ENCODE measurements at regions of chr14 and their contacts with region 1.

Region 1: DNA sequence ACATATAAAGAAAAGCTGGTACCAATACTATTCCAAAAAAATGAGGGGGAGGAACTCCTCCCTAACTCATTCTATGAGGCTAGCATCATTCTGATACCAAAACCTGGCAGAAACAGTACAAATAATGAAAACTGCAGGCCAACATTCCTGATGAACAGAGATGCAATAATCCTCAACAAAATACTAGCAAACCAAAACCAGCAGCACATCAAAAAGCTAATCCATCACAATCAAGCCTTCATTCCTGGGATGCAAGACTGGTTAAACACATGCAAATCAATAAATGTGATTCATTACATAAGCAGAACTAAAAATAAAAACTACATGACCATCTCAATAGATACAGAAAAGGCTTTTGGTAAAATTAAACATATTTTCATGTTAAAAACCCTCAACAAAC is 281.3 kb downstream of the KCNH5 start:
- DNase-seq: no peak
- ATAC-seq: no peak
- H3K4me3 ChIP-seq: no peak overlapping the region
- H3K27ac ChIP-seq: no peak overlapping the region
- H3K4me1 ChIP-seq: no peaks in the 10 kb centered on the region
- H3K27me3 ChIP-seq: no peaks in the 10 kb centered on the region
- CTCF ChIP-seq: no peak
- POLR2A ChIP-seq: no peak
- RAD21 ChIP-seq: no peak

Region 2: DNA sequence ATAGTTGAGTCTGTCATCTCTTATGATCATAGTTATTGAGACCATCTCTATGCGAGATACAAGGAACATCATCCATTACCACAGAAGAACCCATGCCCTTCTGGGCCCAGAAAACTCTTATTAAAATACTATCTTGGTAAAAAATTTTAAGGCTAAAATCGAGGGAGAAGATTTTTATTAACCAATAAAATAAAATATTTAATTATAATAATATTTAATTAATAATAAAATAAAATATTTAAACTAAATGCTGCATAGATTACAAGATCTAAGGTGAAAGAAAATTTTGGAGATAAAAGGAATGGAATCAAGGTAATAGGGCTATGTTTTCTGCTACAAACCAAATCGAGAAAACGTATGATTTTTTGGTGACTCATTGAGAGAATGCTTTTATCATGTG is 258.9 kb before region 1 on chr14:
- CTCF ChIA-PET with region 1: no interaction called
- POLR2A ChIA-PET with region 1: no interaction called
- dilution Hi-C with region 1: no loop called
- in situ Hi-C with region 1: no loop called
- intact Hi-C with region 1: loop called (anchors 1 kb)
- DNase-seq: no peak
- ATAC-seq: no peak
- H3K4me3 ChIP-seq: no peak overlapping the region
- H3K27ac ChIP-seq: no peak overlapping the region
- H3K4me1 ChIP-seq: no peaks in the 10 kb centered on the region
- H3K27me3 ChIP-seq: no peaks in the 10 kb centered on the region
- CTCF ChIP-seq: no peak
- POLR2A ChIP-seq: no peak
- RAD21 ChIP-seq: no peak